ENCODE measurements at regions of chr18 and their contacts with region 1.

Region 1: GRCh38 chr18:43271593-43272432 is 5.5 kb downstream of the SYT4 start:
- DNase-seq: no peak
- ATAC-seq: no peak

Region 2: GRCh38 chr18:42114310-42114943 is 1157.4 kb before region 1 on chr18:
- intact Hi-C with region 1: loop called (anchors 5 kb)
- DNase-seq: peak; percentile 53
- ATAC-seq: peak; percentile 93

Region 3: DNA sequence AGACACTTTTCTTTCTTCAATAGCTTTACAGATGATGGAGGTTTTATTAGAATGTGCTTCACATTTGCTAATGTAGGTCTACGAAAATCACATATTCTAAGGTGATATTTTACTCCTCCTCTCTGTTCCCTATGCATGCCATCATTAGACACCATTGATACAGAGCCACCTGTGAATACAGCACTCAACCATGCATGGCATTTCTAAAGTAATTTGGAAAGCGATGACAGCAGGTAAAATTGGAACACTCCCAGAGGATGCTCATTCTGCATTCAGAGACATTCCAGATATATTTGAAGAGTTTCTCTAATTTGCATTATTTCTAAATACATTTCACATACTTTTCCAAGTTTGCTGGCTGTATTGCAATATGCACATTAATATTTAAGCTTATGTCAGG is 91.0 kb before region 1 on chr18:
- intact Hi-C with region 1: no loop called
- DNase-seq: no peak
- ATAC-seq: no peak

Region 4: GRCh38 chr18:43193336-43193735 is 78.5 kb before region 1 on chr18:
- intact Hi-C with region 1: no loop called
- DNase-seq: no peak
- ATAC-seq: no peak

Measured in Right ventricle myocardium superior (tissue), 1 donor.